ENCODE measurements at regions of chr11 and their contacts with region 1.

Region 1: DNA sequence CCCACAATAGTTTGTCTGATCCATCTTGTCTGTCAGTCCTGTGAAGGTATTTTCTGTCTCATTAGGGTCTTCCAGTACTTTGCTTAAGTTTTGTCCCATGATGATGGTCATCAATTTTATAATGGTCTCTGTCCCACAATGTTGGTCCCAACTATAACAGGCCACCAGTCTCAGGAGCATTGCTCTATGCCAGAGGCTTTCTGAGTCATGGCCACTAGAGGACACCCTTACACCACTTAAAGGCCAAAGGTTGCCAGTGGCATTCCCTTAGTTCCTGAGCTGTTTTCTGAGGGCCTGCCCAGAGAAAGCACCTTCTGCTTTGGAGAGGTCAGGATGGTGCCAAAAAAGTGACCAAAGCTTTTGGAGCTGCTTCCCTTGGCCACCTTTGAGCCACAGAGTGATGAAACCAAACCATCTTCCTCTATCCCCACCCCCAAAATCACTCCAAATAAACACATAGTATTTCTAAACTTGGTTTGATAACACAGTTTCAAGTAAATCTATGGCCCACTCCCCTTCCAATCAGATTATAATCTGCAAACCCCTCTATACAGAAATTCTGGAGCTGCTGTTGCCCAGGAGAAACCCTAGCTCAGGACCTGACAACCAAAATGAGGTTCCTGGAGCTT is 19.3 kb downstream of the EIF3F start:
- DNase-seq: peak; percentile 61 to 74 (median 70)
- ATAC-seq: peak; percentile 93
- H3K4me3 ChIP-seq: no peak overlapping the region
- H3K27ac ChIP-seq: no peak overlapping the region
- H3K4me1 ChIP-seq: no peaks in the 10 kb centered on the region
- H3K27me3 ChIP-seq: no peaks in the 10 kb centered on the region
- CTCF ChIP-seq: peak; percentile 58 to 90 (median 85)
- POLR2A ChIP-seq: no peak

Region 2: DNA sequence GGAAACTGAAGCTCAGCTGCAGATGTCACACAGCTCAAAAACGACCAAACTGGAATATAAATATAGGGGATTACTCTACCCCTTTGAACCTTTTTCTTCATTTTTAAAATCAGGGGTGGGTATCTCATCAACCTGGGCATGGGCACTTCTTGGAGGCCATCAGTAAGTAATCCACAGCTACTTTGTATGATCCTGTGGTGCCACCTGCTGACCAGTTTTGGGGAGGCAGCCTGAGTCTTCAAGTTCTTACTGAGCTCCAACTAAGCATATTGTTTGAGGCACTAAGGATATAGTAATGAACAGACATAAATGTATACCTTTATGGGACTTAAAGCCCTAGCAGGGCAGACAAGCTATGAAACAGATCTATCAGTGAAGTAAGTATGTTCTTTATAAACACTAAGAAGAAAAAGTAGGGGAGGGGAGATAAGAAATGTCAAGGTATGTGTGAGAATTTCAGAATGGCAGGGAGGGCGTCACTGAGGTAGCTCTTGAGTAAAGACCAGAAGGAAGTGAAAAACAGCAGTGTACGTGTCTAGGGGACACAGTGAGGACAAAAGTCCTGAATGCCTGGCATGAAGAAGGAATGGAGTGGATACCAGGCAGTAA is 92.9 kb after region 1 on chr11:
- intact Hi-C with region 1: loop called (anchors 5 kb)
- DNase-seq: peak; percentile 75 to 88 (median 78)
- ATAC-seq: peak; percentile 68
- H3K4me3 ChIP-seq: no peak overlapping the region
- H3K27ac ChIP-seq: no peak overlapping the region
- H3K4me1 ChIP-seq: no peaks in the 10 kb centered on the region
- H3K27me3 ChIP-seq: no peaks in the 10 kb centered on the region
- CTCF ChIP-seq: peak; percentile 61 to 79 (median 71)
- POLR2A ChIP-seq: no peak

Measured in body of pancreas (tissue), 4 donors.